ENCODE measurements at regions of chr7 and their contacts with region 1.

Region 1: DNA sequence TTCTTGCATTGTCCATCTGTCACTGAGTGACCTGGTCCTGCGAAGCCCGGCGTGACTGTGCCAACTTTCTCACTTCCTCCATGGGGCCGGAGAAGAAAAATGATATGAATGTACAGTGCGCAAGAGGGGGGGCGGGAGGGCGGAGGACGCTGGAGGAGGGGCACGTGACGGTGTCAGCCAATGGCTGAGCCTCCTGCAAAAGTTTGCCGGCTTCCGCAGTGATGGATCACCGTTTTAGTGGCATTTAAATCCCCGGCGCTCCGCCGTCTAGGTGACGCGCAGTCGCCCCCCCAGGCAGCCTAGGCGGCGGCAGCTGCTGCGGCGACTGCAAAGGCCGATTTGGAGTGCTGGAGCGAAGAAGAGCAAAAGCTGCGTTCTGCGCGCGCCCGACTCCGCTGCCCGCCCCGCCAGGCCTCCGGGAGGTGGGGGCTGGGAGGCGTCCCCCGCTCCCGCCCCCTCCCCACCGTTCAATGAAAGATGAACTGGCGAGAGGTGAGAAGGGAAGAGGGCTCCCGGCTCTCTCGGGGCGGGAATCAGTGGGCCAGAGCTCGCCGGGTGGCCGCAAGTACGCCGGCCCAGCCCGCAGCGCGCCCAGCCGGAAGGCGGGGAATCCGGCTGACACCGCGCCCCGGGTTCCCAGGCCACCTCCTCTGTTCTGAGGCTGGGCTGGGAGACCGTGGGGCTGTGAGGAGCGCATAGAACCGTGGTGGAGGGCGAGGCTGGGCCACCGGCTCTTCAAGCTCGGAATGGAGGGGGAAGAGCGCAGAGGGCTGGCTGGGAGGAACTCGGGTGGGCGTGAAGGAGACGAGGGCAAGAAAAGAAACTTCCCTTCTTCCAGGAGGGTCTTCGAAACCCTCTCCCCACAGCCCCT is at the start of gene HOXA1:
- DNase-seq: peak; percentile 95
- H3K4me3 ChIP-seq: peak within 1 kb of the TSS; percentile 70 to 97 (median 92)
- H3K27ac ChIP-seq: peak within 1 kb of the TSS; percentile 78 to 97 (median 94)
- H3K4me1 ChIP-seq: peaks cover 21 to 69% (median 47%) of the 10 kb centered on the region in 6 donors
- H3K27me3 ChIP-seq: peaks cover 0 to 98% (median 12%) of the 10 kb centered on the region in 7 donors
- CTCF ChIP-seq: no peak
- POLR2A ChIP-seq: peak in 2 of 3 donors; percentile 42 to 86
- total RNA-seq, gene HOXA1: 1.1 to 4.1 (median 1.7) TPM

Region 2: DNA sequence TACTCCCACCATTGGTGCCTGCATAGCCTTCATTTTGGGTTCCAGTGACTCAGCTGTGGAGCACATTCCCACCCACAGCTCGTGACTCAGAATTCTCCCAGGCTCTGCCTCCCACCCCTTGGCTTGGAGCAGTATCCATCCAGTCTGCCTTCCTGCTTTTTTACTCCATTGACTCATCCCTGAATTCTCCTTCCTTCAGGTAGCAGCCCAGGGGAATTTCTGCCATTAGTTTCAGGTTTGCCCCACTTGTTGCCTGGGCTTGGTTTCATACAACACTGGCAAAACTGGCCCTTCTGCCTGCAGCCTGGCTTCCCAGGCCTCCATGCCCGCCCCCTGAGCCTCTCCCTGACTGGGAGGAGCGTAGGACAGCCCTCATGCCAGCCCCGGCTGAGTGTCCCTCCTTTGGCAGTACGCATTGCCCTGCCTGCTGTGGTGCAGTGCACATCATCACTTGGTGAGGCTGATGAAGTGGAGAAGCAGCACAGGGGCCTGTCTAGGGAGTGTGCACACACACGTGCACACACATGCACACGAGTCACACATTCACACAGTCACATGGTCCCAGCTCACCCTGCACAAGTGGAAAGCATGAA is 749.4 kb before region 1 on chr7:
- intact Hi-C with region 1: no loop called
- DNase-seq: no peak
- H3K4me3 ChIP-seq: no peak overlapping the region
- H3K27ac ChIP-seq: no peak overlapping the region
- H3K4me1 ChIP-seq: peaks cover 0 to 22% (median 0%) of the 10 kb centered on the region in 6 donors
- H3K27me3 ChIP-seq: no peaks in the 10 kb centered on the region
- CTCF ChIP-seq: no peak
- POLR2A ChIP-seq: no peak

Region 3: GRCh38 chr7:26853788-26854393 is 242.2 kb before region 1 on chr7:
- intact Hi-C with region 1: loop called (anchors 10 kb)
- DNase-seq: no peak
- H3K4me3 ChIP-seq: no peak overlapping the region
- H3K27ac ChIP-seq: no peak overlapping the region
- H3K4me1 ChIP-seq: peaks cover 0 to 58% (median 37%) of the 10 kb centered on the region in 6 donors
- H3K27me3 ChIP-seq: no peaks in the 10 kb centered on the region
- CTCF ChIP-seq: peak in 10 of 11 experiments; percentile 8 to 58 (median 50)
- POLR2A ChIP-seq: no peak

Region 4: DNA sequence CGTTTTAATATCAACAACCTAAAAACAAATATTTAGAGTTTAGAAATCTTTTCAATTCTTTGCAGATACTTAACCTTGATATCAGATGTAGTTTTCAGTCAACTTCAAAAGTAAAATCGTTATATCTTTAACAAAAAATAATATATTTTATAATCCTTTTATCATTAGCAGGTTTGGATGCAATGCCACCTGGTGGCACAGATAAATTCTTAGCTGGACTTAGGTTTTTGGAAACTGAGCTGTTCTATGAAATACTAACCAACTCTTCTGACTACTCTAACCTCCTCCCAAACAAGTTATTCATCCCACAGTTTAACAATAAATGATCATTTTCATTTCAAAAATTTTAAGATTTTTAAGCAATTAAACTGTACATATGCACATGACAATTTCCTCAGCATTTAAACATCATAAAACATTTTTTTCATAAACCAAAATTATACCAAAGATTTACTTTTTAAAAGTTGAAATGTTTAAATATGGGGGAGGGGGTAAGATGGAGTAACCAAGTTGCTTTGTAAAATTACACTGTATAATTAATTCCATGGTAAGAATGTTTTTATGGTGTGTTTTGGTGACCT is 509.6 kb after region 1 on chr7:
- intact Hi-C with region 1: no loop called
- DNase-seq: no peak
- H3K4me3 ChIP-seq: no peak overlapping the region
- H3K27ac ChIP-seq: no peak overlapping the region
- H3K4me1 ChIP-seq: peaks cover 0 to 3% (median 0%) of the 10 kb centered on the region in 6 donors
- H3K27me3 ChIP-seq: no peaks in the 10 kb centered on the region
- CTCF ChIP-seq: peak in 2 of 11 experiments; percentile 15 to 20
- POLR2A ChIP-seq: no peak